PC-3 (cell line): ENCODE measurements at regions of chr14 and their contacts with region 1.

Region 1: DNA sequence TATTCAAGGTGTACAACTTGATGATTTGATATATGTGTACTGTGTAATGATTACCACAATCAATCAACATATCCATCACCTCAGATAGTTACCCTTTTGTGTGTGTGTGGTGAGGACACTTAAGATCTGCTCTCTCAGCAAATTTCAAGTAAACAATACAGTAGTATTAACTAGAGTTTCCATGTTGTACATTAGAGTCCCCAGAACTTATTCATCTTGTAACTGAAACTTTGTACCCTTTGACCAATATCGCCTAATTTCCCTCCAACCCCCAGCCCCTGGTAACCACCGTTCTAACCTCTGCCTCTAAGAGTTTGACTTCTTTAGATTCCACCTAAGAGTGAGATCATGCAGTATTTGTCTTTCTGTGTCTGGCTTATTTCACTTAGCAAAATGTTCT is 12.1 kb downstream of the ADCK1 start:
- DNase-seq: no peak
- ATAC-seq: no peak
- H3K4me3 ChIP-seq: no peak overlapping the region
- H3K27ac ChIP-seq: no peak overlapping the region
- H3K4me1 ChIP-seq: no peaks in the 10 kb centered on the region
- H3K27me3 ChIP-seq: no peaks in the 10 kb centered on the region
- CTCF ChIP-seq: no peak

Region 2: DNA sequence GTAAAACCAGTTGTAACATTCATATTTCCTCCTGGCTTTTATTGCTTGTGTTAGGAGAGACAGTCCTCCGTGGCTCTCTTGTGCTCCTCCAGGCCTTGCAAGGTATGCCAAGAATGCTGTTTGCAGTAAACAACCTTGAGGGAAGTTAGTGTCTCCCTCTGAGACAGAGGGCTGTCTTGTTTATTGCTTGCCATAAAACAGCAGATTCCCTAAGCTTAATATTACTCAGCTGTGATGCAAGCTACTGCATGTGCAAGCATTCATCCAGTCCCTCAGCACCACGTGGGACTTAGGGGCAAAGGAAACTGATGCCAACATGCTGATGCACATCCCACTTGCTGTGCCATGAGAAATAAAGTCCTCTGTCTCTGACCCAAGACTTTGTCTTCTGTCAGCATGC is 498.0 kb before region 1 on chr14:
- CTCF ChIA-PET with region 1: interaction called, 24 read pairs
- POLR2A ChIA-PET with region 1: no interaction called
- intact Hi-C with region 1: no loop called
- DNase-seq: peak; percentile 92
- ATAC-seq: peak; percentile 87
- H3K4me3 ChIP-seq: no peak overlapping the region
- H3K27ac ChIP-seq: peak overlapping the region; percentile 73
- H3K4me1 ChIP-seq: peaks cover 46% of the 10 kb centered on the region
- H3K27me3 ChIP-seq: no peaks in the 10 kb centered on the region
- CTCF ChIP-seq: peak; percentile 21; the same call in 1 of the 2 replicates

Region 3: DNA sequence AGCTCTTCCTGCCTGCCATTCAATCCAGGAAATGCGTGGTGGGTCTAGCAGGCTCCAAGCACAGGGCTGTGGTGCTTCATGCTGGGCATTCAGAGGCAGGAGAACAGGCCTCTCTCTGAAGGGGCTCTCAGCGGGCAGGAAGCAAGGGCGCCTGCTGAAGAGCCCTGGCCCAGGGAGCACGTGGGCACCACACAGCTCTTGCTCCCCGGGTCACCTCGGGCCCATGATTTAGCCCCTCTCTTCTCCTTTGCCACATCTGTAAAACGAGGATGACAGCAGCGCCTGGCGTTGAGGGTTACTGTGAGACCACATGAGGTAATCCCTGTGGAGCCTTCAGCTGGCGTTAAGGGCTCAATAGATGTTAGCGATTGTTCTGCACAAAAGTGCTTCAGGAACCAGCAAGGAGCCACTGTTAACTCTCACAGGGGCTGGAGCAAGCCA is 158.0 kb before region 1 on chr14:
- CTCF ChIA-PET with region 1: no interaction called
- POLR2A ChIA-PET with region 1: no interaction called
- intact Hi-C with region 1: loop called (anchors 2 kb)
- DNase-seq: no peak
- ATAC-seq: no peak
- H3K4me3 ChIP-seq: no peak overlapping the region
- H3K27ac ChIP-seq: no peak overlapping the region
- H3K4me1 ChIP-seq: no peaks in the 10 kb centered on the region
- H3K27me3 ChIP-seq: no peaks in the 10 kb centered on the region
- CTCF ChIP-seq: no peak

Region 4: DNA sequence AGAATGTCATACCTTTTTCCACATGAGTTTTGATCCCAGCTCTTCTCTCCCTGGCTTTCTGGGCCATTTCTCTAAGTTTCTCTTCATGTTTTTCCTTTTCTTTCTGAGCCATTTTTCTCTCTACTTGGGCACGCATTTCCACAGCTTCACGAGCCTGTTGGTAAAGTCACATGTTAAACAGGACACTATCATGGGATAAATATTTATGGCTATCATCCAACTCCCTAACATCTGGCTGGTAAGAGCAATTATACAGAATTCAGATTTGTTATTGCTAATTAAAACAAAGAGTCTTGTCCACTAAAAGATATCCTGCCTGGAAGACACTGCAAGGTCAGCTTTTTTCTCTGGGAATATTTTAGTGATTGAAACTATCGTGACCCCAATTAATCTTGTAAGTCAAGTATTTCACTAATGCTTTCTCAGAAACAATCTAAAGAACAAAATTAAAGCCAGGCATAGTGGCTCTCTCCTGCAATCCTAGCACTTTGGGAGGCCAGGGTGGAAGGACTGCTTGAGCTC is 81.0 kb before region 1 on chr14:
- CTCF ChIA-PET with region 1: no interaction called
- POLR2A ChIA-PET with region 1: no interaction called
- intact Hi-C with region 1: no loop called
- DNase-seq: no peak
- ATAC-seq: no peak
- H3K4me3 ChIP-seq: no peak overlapping the region
- H3K27ac ChIP-seq: no peak overlapping the region
- H3K4me1 ChIP-seq: no peaks in the 10 kb centered on the region
- H3K27me3 ChIP-seq: no peaks in the 10 kb centered on the region
- CTCF ChIP-seq: no peak

Region 5: DNA sequence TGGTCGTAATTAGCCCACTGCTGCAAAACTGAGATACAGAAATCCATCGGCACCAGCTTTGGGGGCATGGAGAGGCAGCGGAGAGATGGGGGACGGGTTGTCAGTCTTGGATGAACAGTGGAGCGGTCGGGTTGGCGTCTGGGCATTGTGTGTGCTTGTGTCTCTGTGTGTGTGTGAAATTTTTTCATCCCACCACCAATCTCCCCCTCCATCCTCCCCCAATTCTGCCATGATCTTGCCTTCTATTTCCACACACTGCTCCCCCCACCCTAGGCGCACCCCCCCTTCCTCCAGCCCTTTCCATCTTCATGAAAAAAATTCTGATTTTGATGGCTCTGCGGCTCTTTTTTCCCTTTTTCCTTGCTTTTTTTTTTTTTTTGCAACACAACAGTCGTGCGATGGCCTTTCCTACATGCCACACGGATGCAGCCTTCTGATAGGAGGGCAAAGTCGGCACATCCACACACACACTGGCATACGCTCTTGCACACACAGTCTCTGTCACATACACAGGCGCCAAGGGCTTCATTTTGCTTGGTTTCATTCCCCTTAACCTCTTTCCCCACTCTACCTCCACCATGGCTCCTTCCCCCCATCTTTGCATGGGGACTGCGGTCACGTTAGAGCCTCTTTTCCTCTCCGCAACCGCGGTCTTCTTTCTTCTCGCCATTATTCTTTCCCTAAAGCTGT is 361.5 kb after region 1 on chr14:
- CTCF ChIA-PET with region 1: no interaction called
- POLR2A ChIA-PET with region 1: no interaction called
- intact Hi-C with region 1: no loop called
- DNase-seq: no peak
- ATAC-seq: no peak
- H3K4me3 ChIP-seq: no peak overlapping the region
- H3K27ac ChIP-seq: no peak overlapping the region
- H3K4me1 ChIP-seq: no peaks in the 10 kb centered on the region
- H3K27me3 ChIP-seq: peaks cover 18% of the 10 kb centered on the region
- CTCF ChIP-seq: no peak